GM13976 (cell line): ENCODE measurements at regions of chr22 and their contacts with region 1.

Region 1: DNA sequence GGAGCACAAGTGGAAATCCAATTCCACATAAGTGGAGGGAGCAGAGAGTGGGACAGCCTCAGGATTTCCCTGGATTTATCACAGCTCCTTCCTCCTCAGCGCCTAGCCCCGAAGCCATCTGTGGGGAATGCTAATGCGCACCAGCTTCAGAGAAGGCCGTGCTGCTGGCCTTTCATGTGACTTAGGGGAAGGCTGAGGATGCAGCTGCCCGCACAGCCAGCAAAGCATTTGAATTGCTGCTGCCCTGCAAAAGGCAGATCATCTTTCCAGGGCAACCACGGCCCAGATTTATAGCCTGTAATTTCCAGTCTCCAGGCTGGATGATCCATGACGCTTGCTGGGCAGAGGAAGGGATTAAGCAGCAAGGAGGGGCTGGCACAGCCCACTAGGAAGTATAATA is 29.9 kb downstream of the SYN3 start:
- DNase-seq: no peak
- CTCF ChIP-seq: no peak

Region 2: GRCh38 chr22:32874976-32875375 is 153.3 kb before region 1 on chr22:
- in situ Hi-C with region 1: no loop called
- DNase-seq: no peak
- CTCF ChIP-seq: no peak

Region 3: GRCh38 chr22:33209930-33210784 is 181.9 kb after region 1 on chr22:
- in situ Hi-C with region 1: loop called (anchors 10 kb)
- DNase-seq: peak; percentile 85
- CTCF ChIP-seq: peak; percentile 60